Dendritic cell treated with granulocyte-macrophage colony-stimulating factor and Interleukin-4, amounts not matched to agents 40 ng/mL and 50 ng/mL, for 4 days (primary cell): ENCODE measurements at regions of chr20 and their contacts with region 1.

Region 1: GRCh38 chr20:56468316-56469082 is at the start of gene RTF2:
- H3K4me3 Mint-ChIP-seq: peak within 1 kb of the TSS; percentile 100
- H3K27ac Mint-ChIP-seq: peak within 1 kb of the TSS; percentile 99
- H3K4me1 Mint-ChIP-seq: peaks cover 68% of the 10 kb centered on the region
- H3K27me3 Mint-ChIP-seq: no peaks in the 10 kb centered on the region

Region 2: DNA sequence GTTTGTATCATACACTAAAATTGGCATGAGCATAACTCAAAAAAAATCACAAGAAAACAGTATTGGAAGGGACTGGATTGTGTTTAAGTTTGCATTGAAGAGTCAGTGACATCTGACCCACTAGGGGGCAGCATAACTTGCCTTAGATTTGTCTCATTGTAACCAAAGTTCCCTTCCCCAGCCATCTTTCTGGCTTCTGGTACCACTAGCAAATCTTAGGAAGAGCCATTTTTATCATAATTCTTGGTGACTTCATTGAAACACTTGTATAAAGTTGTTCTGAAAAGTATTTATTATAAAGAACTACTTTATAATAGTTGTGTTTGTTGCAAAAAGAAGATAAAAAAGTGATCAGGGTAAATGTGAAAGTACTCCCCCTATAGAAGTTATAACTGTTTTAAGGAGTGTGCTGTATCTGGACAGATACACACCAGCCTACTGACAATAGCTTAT is 68.4 kb before region 1 on chr20:
- intact Hi-C with region 1: loop called (anchors 2 kb)
- H3K4me3 Mint-ChIP-seq: no peak overlapping the region
- H3K27ac Mint-ChIP-seq: no peak overlapping the region
- H3K4me1 Mint-ChIP-seq: no peaks in the 10 kb centered on the region
- H3K27me3 Mint-ChIP-seq: no peaks in the 10 kb centered on the region

Region 3: GRCh38 chr20:56411759-56412472 is 56.6 kb before region 1 on chr20 and contains the start of gene CASS4:
- intact Hi-C with region 1: loop called (anchors 2 kb)
- H3K4me3 Mint-ChIP-seq: peak within 1 kb of the TSS; percentile 94
- H3K27ac Mint-ChIP-seq: peak within 1 kb of the TSS; percentile 89
- H3K4me1 Mint-ChIP-seq: peaks cover 62% of the 10 kb centered on the region
- H3K27me3 Mint-ChIP-seq: no peaks in the 10 kb centered on the region

Region 4: GRCh38 chr20:56429502-56429901 is 39.0 kb before region 1 on chr20:
- intact Hi-C with region 1: no loop called
- H3K4me3 Mint-ChIP-seq: peak overlapping the region; percentile 4
- H3K27ac Mint-ChIP-seq: peak overlapping the region; percentile 52
- H3K4me1 Mint-ChIP-seq: peaks cover 85% of the 10 kb centered on the region
- H3K27me3 Mint-ChIP-seq: peaks cover 4% of the 10 kb centered on the region